SK-N-SH (cell line): ENCODE measurements at regions of chr5 and their contacts with region 1.

Region 1: GRCh38 chr5:91383027-91383955 is at the start of gene ARRDC3:
- DNase-seq: peak; percentile 87
- H3K4me3 ChIP-seq: peak within 1 kb of the TSS; percentile 89 to 94
- H3K27ac ChIP-seq: peak within 1 kb of the TSS; percentile 100
- H3K4me1 ChIP-seq: peaks cover 1 to 5% of the 10 kb centered on the region in 2 experiments; a peak in 2 of 4 replicates
- H3K27me3 ChIP-seq: no peaks in the 10 kb centered on the region
- CTCF ChIP-seq: no peak
- EP300 ChIP-seq: peak; percentile 9 to 46; a peak in 2 of 4 replicates
- RAD21 ChIP-seq: peak; percentile 1; the same call in 1 of the 2 replicates
- polyA plus RNA-seq, gene ARRDC3: 24.6 and 26.0 TPM in 2 replicates

Region 2: GRCh38 chr5:90940227-90940995 is 442.9 kb before region 1 on chr5:
- CTCF ChIA-PET with region 1: interaction called, 128 read pairs
- POLR2A ChIA-PET with region 1: interaction called, 3 read pairs
- DNase-seq: peak; percentile 63
- H3K4me3 ChIP-seq: no peak overlapping the region
- H3K27ac ChIP-seq: peak overlapping the region in 1 of 2 experiments; percentile 87; a peak in 2 of 4 replicates
- H3K4me1 ChIP-seq: peaks cover 12 to 21% of the 10 kb centered on the region in 2 experiments; a peak in 3 of 4 replicates
- H3K27me3 ChIP-seq: no peaks in the 10 kb centered on the region
- CTCF ChIP-seq: no peak
- EP300 ChIP-seq: no peak
- RAD21 ChIP-seq: peak; percentile 12; the same call in 1 of the 2 replicates

Region 3: GRCh38 chr5:91109634-91110033 is 273.7 kb before region 1 on chr5:
- CTCF ChIA-PET with region 1: interaction called, 62 read pairs
- POLR2A ChIA-PET with region 1: interaction called, 3 read pairs
- DNase-seq: no peak
- H3K4me3 ChIP-seq: no peak overlapping the region
- H3K27ac ChIP-seq: no peak overlapping the region
- H3K4me1 ChIP-seq: no peaks in the 10 kb centered on the region; a peak in 2 of 4 replicates
- H3K27me3 ChIP-seq: no peaks in the 10 kb centered on the region
- CTCF ChIP-seq: peak; percentile 39
- EP300 ChIP-seq: no peak
- RAD21 ChIP-seq: peak; percentile 20; the same call in 1 of the 2 replicates

Region 4: GRCh38 chr5:91232523-91232922 is 150.8 kb before region 1 on chr5:
- CTCF ChIA-PET with region 1: interaction called, 39 read pairs
- POLR2A ChIA-PET with region 1: interaction called, 4 read pairs
- DNase-seq: no peak
- H3K4me3 ChIP-seq: no peak overlapping the region
- H3K27ac ChIP-seq: no peak overlapping the region
- H3K4me1 ChIP-seq: no peaks in the 10 kb centered on the region; a peak in 1 of 4 replicates
- H3K27me3 ChIP-seq: no peaks in the 10 kb centered on the region
- CTCF ChIP-seq: no peak
- EP300 ChIP-seq: no peak
- RAD21 ChIP-seq: no peak

Region 5: DNA sequence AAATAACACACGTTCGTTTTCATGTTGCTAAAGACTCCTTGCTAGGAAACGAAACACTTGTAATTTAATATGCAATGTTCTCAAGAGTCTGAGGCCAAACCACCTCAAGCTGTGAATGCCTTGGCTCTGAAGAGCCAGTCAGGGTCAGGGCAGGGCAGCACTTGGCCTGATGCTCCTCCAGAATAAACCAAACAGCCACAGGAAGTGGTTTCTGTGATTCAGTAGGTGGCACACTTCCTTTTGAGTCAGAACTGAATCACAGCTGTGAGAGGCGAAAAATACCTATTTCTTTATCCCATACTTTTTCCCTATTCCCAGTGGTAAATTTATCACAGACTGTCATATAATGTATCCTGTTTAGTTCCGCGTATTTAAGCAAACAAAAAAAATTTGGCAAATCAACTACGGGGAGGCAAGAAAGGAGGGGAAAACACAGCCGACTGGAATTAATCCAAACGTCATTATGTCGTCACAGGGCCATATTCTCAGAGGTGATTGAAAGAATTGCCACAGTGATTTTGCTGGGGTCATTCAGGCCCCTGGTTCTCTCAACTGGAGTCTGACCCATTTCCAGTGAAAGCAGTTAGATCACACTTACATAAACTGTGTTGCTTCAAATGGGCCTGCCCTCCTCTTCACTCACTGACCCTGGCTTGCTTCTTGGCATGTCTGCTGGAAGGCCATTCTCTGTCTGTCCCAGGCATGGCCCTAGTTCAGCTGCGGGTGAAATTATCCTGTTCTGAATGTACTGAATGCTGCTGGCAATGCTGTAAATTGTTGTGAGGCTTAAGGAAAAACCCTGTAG is 71.4 kb before region 1 on chr5:
- CTCF ChIA-PET with region 1: interaction called, 10 read pairs
- POLR2A ChIA-PET with region 1: interaction called, 6 read pairs
- DNase-seq: peak; percentile 27
- H3K4me3 ChIP-seq: peak overlapping the region in 1 of 2 experiments; percentile 13; a peak in 1 of 4 replicates
- H3K27ac ChIP-seq: peak overlapping the region; percentile 81 to 99
- H3K4me1 ChIP-seq: peaks cover 28 to 31% of the 10 kb centered on the region in 2 experiments; a peak in 3 of 4 replicates
- H3K27me3 ChIP-seq: no peaks in the 10 kb centered on the region
- CTCF ChIP-seq: no peak
- EP300 ChIP-seq: peak; percentile 59 to 99
- RAD21 ChIP-seq: peak; percentile 45

Region 6: DNA sequence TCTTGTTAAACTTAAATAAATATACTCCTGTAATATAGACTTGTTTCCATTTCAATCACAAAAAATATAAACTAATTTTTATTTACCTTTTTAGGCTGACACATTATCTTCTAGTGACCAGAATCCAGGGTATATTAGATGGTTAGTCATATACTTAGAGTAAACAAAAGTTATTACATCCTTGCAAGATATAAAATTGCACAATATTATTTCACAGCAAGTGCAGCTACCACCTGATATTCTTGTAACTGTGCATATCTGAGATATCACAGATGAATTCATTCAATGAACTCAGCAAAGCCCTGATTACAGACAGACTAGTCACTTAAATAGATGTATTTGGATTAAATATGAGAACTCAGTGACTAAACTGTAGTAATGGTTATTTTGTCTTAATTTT is 25.4 kb after region 1 on chr5:
- CTCF ChIA-PET with region 1: interaction called, 13 read pairs
- POLR2A ChIA-PET with region 1: no interaction called
- DNase-seq: no peak
- H3K4me3 ChIP-seq: no peak overlapping the region
- H3K27ac ChIP-seq: no peak overlapping the region
- H3K4me1 ChIP-seq: no peaks in the 10 kb centered on the region; a peak in 1 of 4 replicates
- H3K27me3 ChIP-seq: no peaks in the 10 kb centered on the region
- CTCF ChIP-seq: no peak
- EP300 ChIP-seq: no peak
- RAD21 ChIP-seq: no peak

Region 7: DNA sequence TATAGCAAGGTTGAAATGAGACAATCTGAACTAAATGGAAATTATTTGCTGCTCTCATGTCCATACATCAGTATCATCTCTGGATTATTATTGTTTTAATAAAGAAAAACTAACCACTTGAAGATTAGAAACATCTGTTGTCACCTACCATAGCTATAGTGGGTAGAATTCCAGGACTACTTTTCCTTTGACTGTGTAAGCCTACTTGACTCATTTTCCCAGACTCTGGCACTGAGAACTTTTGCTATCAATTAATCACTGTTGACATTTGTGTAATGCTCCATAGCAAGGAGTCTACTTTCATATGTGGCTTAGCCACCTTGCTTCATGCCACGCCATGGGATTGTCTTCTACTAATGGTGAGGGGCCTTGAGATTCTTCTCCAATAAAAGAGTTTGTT is 59.7 kb after region 1 on chr5:
- CTCF ChIA-PET with region 1: no interaction called
- POLR2A ChIA-PET with region 1: no interaction called
- DNase-seq: no peak
- H3K4me3 ChIP-seq: no peak overlapping the region
- H3K27ac ChIP-seq: peak overlapping the region in 1 of 2 experiments; percentile 33; a peak in 2 of 4 replicates
- H3K4me1 ChIP-seq: 0 out of 4 replicates have a peak, but pooled peaks cover 0 to 3% of the 10 kb centered on the region in 2 experiments
- H3K27me3 ChIP-seq: no peaks in the 10 kb centered on the region
- CTCF ChIP-seq: no peak
- EP300 ChIP-seq: peak in 1 of 2 experiments; percentile 37; a peak in 1 of 4 replicates
- RAD21 ChIP-seq: no peak